A673 (cell line): ENCODE measurements at regions of chr6 and their contacts with region 1.

Region 1: DNA sequence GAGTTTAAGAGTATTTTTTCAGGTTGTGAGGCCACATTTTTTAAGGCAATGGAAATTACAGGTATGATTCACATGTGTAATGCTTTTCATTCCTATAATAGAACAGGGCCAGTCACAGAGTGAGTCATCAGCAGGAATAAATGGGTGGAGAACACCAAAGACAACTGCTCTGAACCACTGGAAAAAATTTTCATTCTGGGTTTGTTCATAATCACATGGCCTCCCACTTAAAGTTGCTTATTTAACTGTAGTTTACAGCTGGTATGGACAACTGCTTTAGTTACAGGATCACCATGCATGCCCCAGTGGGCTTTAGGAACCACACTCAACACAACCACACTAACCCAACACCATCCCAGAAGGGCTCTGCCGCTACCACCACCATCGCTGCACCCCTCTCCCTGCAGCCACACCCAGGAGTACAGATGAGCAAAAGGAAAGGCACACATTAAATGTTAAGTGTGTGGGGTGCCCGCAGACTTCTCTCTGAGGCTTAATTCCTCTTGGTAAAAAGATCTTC is 107.0 kb upstream of the DST start:
- DNase-seq: no peak
- H3K4me3 ChIP-seq: no peak overlapping the region
- H3K27ac ChIP-seq: no peak overlapping the region
- H3K4me1 ChIP-seq: peaks cover 12% of the 10 kb centered on the region
- H3K27me3 ChIP-seq: no peaks in the 10 kb centered on the region
- CTCF ChIP-seq: no peak

Region 2: GRCh38 chr6:56714982-56715456 is 34.7 kb before region 1 on chr6:
- CTCF ChIA-PET with region 1: no interaction called
- POLR2A ChIA-PET with region 1: no interaction called
- intact Hi-C with region 1: loop called (anchors 5 kb)
- DNase-seq: peak; percentile 97
- H3K4me3 ChIP-seq: no peak overlapping the region
- H3K27ac ChIP-seq: peak overlapping the region; percentile 33
- H3K4me1 ChIP-seq: peaks cover 40% of the 10 kb centered on the region
- H3K27me3 ChIP-seq: no peaks in the 10 kb centered on the region
- CTCF ChIP-seq: no peak

Region 3: DNA sequence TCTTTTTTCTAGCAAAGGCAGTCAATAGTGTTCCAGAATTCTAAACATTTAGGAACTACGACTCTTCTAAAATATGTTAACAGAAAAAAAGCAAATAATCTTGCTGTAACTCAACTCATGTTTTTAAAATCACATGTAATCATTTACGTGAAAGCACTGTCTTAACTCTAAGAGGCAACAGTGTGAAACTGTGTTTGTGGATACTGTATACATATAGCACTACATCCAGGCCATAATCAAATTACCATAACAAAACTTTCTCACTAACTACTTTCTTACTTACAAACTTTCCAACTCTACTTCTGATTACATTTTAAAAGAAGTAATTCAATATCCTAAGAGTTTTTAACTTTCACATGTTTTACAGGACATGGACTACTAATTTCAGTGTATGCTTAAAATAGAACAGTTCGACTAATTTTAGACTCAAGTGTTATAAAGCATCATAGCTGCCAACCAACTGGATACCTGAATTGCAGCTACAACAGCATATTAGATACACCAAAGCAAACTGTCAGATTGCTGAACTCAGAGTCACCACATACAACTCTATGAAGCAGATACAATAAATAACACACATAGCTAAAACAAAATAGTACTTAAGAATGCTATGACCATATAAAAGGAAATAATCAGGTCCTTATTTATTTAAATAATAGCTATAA is 83.6 kb after region 1 on chr6:
- CTCF ChIA-PET with region 1: no interaction called
- POLR2A ChIA-PET with region 1: no interaction called
- intact Hi-C with region 1: no loop called
- DNase-seq: no peak
- H3K4me3 ChIP-seq: no peak overlapping the region
- H3K27ac ChIP-seq: no peak overlapping the region
- H3K4me1 ChIP-seq: no peaks in the 10 kb centered on the region
- H3K27me3 ChIP-seq: no peaks in the 10 kb centered on the region
- CTCF ChIP-seq: no peak

Region 4: DNA sequence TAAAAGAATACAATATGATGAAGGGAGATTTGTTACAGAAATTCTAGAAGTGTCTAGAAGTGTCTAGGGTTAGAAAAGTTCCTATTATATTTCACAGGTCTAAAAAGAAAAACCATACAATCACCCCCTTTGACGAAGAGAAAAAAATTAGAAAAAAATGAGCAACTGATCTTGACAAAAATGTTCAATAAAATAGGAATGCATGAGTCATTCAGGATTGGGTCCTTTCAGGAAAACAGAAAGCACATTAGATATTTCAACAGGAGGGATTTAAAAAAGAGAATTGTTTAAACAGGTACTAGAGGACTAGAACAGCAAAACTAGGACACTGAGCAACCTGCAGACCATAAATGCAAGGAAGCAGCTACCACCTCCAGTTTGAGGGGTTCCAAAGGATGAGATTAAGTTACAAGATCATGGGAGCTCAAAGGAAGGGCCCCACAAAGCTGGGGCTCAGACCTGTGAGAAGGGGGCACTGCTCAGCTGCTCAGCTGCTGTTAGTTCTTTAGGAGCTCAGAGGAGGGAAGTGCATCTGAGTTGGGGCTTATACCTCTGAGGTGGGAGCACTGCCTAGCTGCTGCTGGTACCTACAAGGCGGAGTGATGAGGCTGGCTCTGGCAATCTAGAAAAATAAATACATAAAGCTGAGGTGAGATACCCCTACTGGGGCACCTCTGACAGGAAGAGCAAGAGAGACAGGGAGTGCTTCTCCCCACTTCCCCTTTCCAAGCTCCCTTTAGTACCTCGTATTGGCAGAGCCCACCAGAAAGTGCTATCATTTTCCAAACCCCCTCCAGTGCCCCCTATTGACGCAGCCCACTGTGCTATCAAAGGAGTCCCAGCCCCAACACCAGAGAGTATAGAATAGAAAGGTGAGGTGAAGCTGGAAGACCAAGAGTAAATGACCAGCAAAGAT is 178.1 kb after region 1 on chr6:
- CTCF ChIA-PET with region 1: no interaction called
- POLR2A ChIA-PET with region 1: no interaction called
- intact Hi-C with region 1: no loop called
- DNase-seq: no peak
- H3K4me3 ChIP-seq: no peak overlapping the region
- H3K27ac ChIP-seq: no peak overlapping the region
- H3K4me1 ChIP-seq: peaks cover 13% of the 10 kb centered on the region
- H3K27me3 ChIP-seq: no peaks in the 10 kb centered on the region
- CTCF ChIP-seq: 0 out of 2 replicates have a peak, but pooled peaks have one; percentile 21